Left cardiac atrium (tissue), 4 donors: ENCODE measurements at regions of chr15 and their contacts with region 1.

Region 1: GRCh38 chr15:92091155-92091734 is 237.7 kb downstream of the SLCO3A1 start:
- DNase-seq: peak; percentile 51
- ATAC-seq: peak in 1 of 2 donors; percentile 50

Region 2: DNA sequence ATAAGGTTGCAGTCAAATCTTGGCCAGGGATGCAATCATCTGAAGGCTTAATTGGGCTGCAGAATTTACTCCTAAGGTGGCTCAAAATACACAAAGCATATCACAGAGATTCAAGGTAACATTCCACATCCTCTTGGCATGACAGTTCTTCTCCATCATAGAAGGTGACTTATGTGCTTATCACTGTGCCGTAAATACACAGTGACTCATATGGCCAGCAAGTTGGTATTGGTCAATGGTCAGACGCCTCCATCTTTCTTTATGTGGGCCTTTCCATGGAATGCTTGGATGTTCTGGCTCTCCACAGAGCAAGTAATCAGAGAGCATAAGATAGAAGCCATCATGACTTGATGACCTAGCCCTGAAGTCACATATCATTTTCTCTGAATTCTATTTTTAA is 133.6 kb after region 1 on chr15:
- intact Hi-C with region 1: loop called in 1 of 2 experiments (anchors 5 kb)
- DNase-seq: no peak
- ATAC-seq: peak in 1 of 2 donors; percentile 62